ENCODE measurements at regions of chr4 and their contacts with region 1.

Region 1: GRCh38 chr4:128863312-128864075 is 54.0 kb downstream of the JADE1 start:
- DNase-seq: peak; percentile 64
- ATAC-seq: peak; percentile 83
- H3K4me3 ChIP-seq: no peak overlapping the region
- H3K27ac ChIP-seq: no peak overlapping the region
- H3K4me1 ChIP-seq: no peaks in the 10 kb centered on the region
- H3K27me3 ChIP-seq: no peaks in the 10 kb centered on the region
- CTCF ChIP-seq: peak; percentile 77

Region 2: GRCh38 chr4:128191115-128191781 is 672.2 kb before region 1 on chr4:
- CTCF ChIA-PET with region 1: no interaction called
- POLR2A ChIA-PET with region 1: no interaction called
- intact Hi-C with region 1: loop called (anchors 2 kb)
- DNase-seq: peak; percentile 71
- ATAC-seq: peak; percentile 67
- H3K4me3 ChIP-seq: no peak overlapping the region
- H3K27ac ChIP-seq: no peak overlapping the region
- H3K4me1 ChIP-seq: no peaks in the 10 kb centered on the region
- H3K27me3 ChIP-seq: no peaks in the 10 kb centered on the region
- CTCF ChIP-seq: peak; percentile 91

Region 3: DNA sequence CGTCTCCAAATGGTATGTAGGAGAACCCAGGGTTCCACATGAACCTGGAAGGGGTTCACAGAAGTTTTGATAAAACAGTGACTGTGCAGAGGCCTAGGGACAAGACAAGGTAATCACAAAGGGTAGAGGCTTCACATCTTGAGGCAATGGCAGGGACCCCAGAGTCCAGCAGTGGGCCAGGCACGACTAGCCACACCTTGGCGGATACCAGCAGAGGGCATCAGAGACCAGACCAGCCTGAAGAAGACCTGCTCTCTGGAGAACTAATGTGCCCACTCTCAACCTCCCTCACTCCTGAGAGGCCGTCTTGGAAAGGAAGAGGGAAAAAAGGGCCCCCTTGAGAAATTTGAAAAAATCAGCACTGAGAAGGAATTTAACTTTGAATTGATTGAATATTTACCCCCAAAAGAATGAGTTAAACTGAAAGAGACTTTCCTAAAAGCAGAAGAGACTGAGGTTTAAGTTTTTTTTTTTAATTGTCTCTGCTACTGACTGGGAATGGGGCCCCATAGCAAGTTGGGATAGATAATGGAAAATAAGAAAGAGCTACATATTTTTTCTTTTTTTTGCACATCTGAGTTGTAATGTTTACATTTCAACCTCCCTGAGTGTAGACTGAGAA is 297.8 kb before region 1 on chr4:
- CTCF ChIA-PET with region 1: no interaction called
- POLR2A ChIA-PET with region 1: no interaction called
- intact Hi-C with region 1: loop called (anchors 5 kb)
- DNase-seq: peak; percentile 46
- ATAC-seq: peak; percentile 71
- H3K4me3 ChIP-seq: no peak overlapping the region
- H3K27ac ChIP-seq: no peak overlapping the region
- H3K4me1 ChIP-seq: peaks cover 12% of the 10 kb centered on the region
- H3K27me3 ChIP-seq: no peaks in the 10 kb centered on the region
- CTCF ChIP-seq: peak; percentile 72

Region 4: DNA sequence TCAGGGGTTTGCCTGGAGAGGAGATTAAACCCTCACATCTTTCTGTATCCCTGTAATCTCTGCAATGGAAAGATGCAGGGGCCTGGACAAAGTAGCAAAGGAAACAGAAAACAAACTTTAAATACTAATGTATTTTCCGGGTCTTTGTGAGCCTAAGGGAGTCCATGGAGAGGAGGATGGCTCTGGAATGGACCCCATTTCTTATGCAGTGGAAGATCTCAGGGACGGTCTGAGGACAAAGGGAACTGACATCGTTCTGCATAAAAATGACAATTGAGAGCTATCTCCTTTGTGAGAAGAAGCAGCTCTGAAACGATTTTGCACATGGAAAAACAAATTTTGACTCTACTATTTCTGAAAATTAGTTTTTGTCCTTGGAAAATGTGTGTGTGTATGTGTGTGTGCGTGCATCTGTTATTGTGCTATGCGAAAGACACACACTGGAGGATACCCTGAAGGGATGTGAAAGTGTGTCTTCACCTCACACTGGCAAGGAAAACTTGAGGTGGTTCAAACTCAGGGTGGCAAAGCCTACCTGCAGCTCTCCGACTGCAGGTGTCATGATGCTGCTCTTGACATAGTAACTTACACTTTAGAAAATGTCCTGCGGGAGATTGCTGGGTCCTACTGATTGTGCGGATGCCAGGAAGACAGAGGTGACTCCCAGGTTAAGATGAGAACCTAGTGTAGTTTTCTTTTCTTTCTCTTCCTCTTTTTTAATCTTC is 180.4 kb before region 1 on chr4:
- CTCF ChIA-PET with region 1: no interaction called
- POLR2A ChIA-PET with region 1: no interaction called
- intact Hi-C with region 1: no loop called
- DNase-seq: no peak
- ATAC-seq: no peak
- H3K4me3 ChIP-seq: no peak overlapping the region
- H3K27ac ChIP-seq: no peak overlapping the region
- H3K4me1 ChIP-seq: no peaks in the 10 kb centered on the region
- H3K27me3 ChIP-seq: 0 out of 2 replicates have a peak, but pooled peaks cover 4% of the 10 kb centered on the region
- CTCF ChIP-seq: no peak

Region 5: DNA sequence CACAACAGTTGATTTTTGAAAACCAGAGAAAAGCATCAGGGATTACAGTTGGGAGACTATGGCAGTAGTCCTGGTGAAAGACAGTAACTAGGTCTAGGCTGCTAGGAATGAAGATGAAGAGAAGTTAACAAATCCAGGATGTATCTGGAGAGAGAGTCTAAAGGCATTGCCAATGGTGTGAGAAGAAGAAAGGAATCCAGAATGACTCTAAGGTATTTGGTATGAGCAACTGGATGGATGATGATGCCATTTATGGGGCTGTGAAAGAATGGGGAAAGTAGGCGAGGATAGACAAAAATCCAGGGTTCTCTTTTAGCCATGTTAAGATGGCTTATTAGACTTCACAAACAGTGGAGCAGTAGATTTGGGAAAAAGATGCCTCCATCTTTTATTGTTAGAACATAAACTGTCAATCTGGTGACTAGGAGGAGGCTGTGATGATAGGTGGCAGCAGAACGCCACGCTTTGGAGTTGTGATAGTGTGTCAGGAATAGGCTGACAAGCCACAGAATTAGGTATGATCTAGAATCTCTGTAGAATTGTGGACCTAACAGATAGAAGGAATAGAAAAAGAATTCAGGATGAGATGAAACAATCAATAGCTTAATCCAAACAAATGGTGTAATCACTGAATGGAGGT is 81.3 kb before region 1 on chr4:
- CTCF ChIA-PET with region 1: no interaction called
- POLR2A ChIA-PET with region 1: no interaction called
- intact Hi-C with region 1: loop called (anchors 1 kb)
- DNase-seq: peak; percentile 33
- ATAC-seq: peak; percentile 54
- H3K4me3 ChIP-seq: no peak overlapping the region
- H3K27ac ChIP-seq: no peak overlapping the region
- H3K4me1 ChIP-seq: no peaks in the 10 kb centered on the region
- H3K27me3 ChIP-seq: no peaks in the 10 kb centered on the region
- CTCF ChIP-seq: peak; percentile 54

Region 6: GRCh38 chr4:128809477-128810330 is 53.8 kb before region 1 on chr4 and contains the start of gene JADE1:
- CTCF ChIA-PET with region 1: no interaction called
- POLR2A ChIA-PET with region 1: no interaction called
- intact Hi-C with region 1: loop called (anchors 1 kb)
- DNase-seq: peak; percentile 85
- ATAC-seq: peak; percentile 62
- H3K4me3 ChIP-seq: peak within 1 kb of the TSS; percentile 82
- H3K27ac ChIP-seq: peak within 1 kb of the TSS; percentile 64
- H3K4me1 ChIP-seq: peaks cover 5% of the 10 kb centered on the region; the same call in 1 of the 2 replicates
- H3K27me3 ChIP-seq: no peaks in the 10 kb centered on the region
- CTCF ChIP-seq: peak; percentile 55
- total RNA-seq, gene JADE1: 10.8 and 10.9 TPM in 2 replicates

Region 7: DNA sequence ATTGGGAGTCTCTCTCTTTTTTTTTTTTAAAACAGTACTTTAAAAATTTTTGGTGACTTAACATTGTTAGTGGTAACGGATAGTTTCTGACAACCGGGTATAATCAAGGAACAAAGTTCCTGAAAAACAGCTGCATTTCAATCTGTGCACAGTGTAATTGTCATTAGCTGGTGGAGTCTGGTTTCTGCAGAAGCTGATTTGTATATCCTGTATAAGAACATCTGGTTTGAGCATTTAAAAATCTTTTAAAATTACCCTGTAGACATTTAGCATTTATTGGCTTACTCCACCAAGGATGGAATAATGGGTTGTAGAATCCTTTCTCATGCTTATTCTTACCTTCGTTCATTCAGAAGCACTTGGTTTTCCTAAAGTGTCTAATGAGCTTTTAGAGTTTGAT is 42.8 kb before region 1 on chr4:
- CTCF ChIA-PET with region 1: no interaction called
- POLR2A ChIA-PET with region 1: no interaction called
- intact Hi-C with region 1: no loop called
- DNase-seq: no peak
- ATAC-seq: no peak
- H3K4me3 ChIP-seq: no peak overlapping the region
- H3K27ac ChIP-seq: no peak overlapping the region
- H3K4me1 ChIP-seq: peaks cover 40% of the 10 kb centered on the region
- H3K27me3 ChIP-seq: no peaks in the 10 kb centered on the region
- CTCF ChIP-seq: no peak